GM18951 (cell line): ENCODE measurements at regions of chr11 and their contacts with region 1.

Region 1: DNA sequence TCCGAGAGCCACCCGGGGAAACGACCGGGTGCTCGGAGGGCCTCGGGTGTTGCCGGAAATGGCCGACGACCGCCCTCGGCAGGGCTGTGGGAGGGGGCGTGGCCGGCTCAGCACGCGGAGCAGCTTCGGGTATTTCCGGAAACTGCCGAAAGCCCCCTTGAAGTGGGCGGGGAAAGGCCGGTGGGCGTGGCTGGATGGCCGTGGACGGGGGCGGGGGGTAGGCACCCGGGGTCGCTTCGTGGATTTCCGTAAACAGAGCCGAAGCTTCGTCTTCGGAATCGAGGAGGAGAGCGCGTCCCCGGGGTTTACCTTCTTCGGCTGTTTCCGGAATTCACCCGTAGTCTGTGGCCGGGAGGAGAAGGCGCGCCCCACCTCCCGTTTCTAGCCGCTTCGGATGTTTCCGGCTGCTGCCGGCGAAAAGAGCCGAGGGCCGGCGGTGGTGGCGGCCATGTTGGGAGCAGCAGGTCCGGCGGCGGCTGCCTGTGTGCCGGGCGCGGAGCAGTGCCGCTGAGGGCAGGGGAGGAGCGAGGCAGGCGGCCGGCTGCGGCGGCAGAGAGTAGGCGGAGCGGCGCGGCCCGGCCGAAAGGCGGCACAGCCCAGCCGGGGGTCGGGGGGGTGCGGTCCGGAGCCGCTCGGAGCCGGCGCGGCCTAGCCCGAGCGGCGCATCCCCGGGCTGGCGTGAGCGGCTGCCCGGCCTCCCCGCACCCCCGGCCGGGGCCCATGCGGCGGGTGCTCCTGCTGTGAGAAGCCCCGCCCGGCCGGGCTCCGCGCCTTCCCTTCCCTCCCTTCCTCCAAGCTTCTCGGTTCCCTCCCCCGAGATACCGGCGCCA is at the start of gene MARK2:
- POLR2A ChIP-seq: peak; percentile 80

Region 2: DNA sequence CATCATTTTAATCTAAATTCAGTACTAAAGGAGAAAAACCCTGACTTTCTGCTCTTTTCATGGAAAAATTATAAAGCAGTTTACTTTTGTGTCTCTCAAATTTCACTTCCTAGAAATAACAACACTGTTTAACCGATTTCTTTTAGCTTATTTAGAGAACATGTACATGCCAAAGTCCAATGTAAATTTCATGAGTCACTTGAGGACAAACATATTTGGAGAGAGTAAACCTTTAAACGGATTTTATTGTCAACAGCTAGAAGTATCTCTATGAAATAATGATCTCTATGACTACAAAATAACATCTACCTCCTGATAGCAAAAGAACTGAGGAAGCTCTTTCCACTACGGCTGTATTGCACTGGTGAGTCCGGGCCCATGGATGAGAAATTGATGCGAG is 549.2 kb before region 1 on chr11:
- in situ Hi-C with region 1: no loop called
- POLR2A ChIP-seq: no peak

Region 3: DNA sequence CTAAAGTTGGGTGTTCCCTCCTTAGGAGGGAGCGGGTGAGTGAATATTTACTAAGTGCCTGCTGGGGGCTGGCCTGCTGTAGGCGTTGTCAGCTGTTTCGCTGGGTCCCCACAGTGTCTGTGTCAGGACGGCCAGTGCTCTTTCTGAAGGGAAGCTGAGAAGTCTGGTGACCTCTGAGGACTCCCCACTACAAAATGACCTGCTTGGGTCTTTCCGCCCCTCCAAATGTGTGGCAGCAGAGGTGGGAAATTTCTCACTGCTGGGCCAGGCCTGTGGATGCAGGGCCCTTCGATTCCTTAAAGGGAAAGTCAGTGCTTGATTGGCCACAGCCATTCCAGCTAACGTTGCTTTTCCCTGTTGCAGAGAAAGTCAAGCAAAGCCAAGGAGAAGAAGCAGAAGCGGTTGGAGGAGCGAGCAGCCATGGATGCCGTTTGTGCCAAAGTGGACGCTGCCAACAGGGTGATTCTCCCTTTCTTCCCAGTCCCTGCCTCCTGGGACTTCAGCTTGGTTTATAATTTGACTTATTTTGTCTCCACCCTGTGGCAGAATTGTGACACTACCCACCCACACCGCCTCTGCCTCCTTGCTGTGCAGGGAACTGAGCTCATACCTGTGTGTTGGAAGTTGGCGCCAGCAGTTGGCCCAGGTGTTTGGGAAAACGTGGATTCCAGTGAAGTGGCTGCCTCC is 106.7 kb after region 1 on chr11:
- in situ Hi-C with region 1: loop called (anchors 10 kb)
- POLR2A ChIP-seq: no peak

Region 4: GRCh38 chr11:64152841-64153691 is 314.2 kb after region 1 on chr11:
- in situ Hi-C with region 1: loop called (anchors 10 kb)
- POLR2A ChIP-seq: no peak